Heart right ventricle (tissue), 16 donors: ENCODE measurements at regions of chr9 and their contacts with region 1.

Region 1: DNA sequence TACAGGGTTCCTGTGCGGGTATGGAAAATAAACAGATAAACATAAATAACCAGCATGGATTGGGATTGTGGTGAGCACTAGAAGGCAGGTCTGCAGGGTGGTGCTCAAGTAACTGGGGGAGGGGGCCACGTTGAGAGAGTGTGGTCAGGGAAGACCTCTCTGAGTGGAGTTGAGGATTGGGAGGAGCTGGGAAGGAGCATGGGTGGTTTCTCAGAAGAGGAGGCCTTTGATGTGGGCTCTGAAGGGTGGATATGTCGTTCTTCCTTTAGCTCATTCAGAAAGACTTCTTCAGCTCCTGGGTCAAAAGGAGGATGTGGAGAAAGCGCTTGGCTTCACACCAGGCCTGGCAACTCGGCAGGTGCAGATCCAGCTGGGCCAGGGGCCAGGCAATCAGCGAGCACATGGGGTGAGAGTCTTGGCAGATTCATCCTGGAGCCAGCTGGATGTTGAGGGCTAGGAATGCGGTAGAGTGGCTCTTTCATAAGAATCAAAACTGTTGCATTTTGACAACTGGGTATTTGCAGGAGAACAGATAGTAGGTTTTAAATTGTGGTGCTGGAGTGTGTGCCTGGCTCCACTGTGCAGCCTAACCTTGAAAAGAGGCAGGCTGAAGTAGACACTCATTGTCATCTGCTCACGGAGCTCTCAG is 71.7 kb downstream of the PCSK5 start:
- DNase-seq: peak; percentile 31 to 68
- ATAC-seq: peak; percentile 59 to 89 (median 82)
- H3K4me3 ChIP-seq: no peak overlapping the region
- H3K27ac ChIP-seq: no peak overlapping the region
- H3K4me1 ChIP-seq: peaks cover 0 to 31% (median 15%) of the 10 kb centered on the region in 9 donors
- H3K27me3 ChIP-seq: no peaks in the 10 kb centered on the region
- CTCF ChIP-seq: no peak

Region 2: GRCh38 chr9:75728391-75728790 is 233.7 kb before region 1 on chr9:
- intact Hi-C with region 1: no loop called
- DNase-seq: no peak
- ATAC-seq: no peak
- H3K4me3 ChIP-seq: no peak overlapping the region
- H3K27ac ChIP-seq: no peak overlapping the region
- H3K4me1 ChIP-seq: peaks cover 0 to 20% (median 0%) of the 10 kb centered on the region in 9 donors
- H3K27me3 ChIP-seq: no peaks in the 10 kb centered on the region
- CTCF ChIP-seq: no peak

Region 3: GRCh38 chr9:75903785-75904360 is 58.3 kb before region 1 on chr9:
- intact Hi-C with region 1: loop called in 2 of 10 experiments (anchors 10 kb)
- DNase-seq: no peak
- ATAC-seq: peak in 1 of 8 donors; percentile 27
- H3K4me3 ChIP-seq: no peak overlapping the region
- H3K27ac ChIP-seq: no peak overlapping the region
- H3K4me1 ChIP-seq: peaks cover 0 to 15% (median 0%) of the 10 kb centered on the region in 9 donors
- H3K27me3 ChIP-seq: no peaks in the 10 kb centered on the region
- CTCF ChIP-seq: no peak

Region 4: DNA sequence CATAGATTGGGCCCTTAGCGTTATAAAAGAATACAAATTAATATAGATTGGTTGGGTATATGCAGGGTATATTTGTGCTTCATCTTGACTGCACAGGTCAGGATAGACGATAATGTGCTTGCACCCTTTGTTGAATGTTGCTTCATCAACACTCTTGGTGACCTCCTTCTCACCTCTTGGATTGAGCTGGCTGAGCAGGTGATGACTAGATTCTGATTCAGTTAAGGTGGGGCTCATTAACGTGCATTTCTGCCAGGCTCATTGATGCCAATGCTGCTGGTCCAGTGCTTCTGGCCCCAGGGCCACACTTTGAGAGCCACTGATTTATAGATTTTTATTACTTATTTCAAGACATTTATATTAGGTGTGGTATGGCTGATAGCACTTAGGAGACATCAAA is 44.0 kb before region 1 on chr9:
- intact Hi-C with region 1: no loop called
- DNase-seq: no peak
- ATAC-seq: no peak
- H3K4me3 ChIP-seq: no peak overlapping the region
- H3K27ac ChIP-seq: no peak overlapping the region
- H3K4me1 ChIP-seq: no peaks in the 10 kb centered on the region
- H3K27me3 ChIP-seq: no peaks in the 10 kb centered on the region
- CTCF ChIP-seq: no peak

Region 5: DNA sequence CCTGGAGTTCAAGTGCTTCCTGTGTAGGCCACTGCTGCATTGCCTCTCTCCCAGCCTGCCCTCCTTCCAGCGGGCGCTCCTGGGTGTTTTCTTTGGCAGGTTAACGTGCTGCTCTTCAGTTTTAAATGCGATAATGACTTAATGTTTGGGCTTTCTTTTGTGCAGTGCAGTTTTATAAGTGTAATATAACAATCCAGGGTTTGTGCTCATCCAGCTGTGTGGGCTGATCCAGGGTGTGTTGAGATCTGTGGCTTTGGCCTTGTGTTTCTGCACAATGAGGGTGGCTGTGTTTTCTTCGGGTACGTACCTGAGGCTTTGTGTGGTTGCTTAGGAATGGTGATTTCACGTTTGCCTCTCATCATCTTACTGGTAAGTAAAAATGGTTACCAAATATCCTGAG is 21.1 kb before region 1 on chr9:
- intact Hi-C with region 1: no loop called
- DNase-seq: no peak
- ATAC-seq: no peak
- H3K4me3 ChIP-seq: no peak overlapping the region
- H3K27ac ChIP-seq: no peak overlapping the region
- H3K4me1 ChIP-seq: peaks cover 0 to 4% (median 0%) of the 10 kb centered on the region in 9 donors
- H3K27me3 ChIP-seq: no peaks in the 10 kb centered on the region
- CTCF ChIP-seq: no peak